ENCODE measurements at regions of chr22 and their contacts with region 1.

Region 1: DNA sequence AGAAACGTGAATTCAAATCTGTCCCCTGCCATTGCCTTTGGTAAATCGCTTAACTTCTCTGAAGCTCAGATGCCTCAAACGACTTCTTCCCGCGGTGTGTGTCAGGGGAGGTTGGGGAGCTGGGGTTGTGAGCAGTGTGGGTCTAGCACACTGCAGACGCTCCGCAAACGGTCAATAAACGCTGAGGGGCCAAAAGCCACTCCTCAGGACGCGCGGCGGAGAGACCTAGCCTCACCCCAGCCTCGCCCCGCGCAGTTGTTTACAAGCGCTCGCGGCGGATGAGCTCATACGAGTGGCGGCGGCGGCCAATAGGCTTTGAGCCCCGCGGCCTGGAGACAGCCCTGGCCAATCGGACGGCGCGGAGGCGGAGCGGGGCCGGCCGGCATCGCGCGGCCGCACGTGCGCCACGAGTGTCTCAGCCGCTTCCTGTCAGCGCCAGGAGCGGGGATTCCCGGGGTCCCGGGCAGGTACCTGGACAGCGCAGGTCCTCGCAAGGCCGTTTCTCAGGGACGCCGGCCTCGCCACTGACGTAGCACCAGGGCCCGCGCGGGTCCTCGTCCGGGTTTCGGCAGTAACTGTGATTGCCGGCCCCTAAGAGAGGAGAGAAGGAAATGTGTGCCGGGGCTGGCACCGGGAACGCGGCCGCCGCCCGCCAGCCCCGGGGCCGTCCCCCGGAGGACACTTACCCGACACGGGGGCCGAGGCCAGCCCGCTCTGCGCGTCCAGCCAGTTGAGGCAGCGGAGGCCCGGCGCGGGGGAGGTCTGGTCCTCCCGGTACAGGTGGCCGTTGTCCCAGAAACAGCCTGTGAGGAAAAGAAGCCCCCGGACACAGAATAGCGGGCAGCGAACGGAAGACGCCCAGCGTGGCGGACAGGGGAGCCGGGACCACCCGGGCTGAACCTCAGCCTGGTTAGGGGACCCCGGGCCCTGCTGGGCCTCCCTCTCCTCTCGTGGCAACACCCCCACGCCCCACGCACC is 1.5 kb downstream of the PIK3IP1 start:
- DNase-seq: peak; percentile 89
- ATAC-seq: peak; percentile 86
- H3K4me3 Mint-ChIP-seq: peak overlapping the region; percentile 92
- H3K27ac Mint-ChIP-seq: peak overlapping the region; percentile 100
- H3K4me1 Mint-ChIP-seq: peaks cover 80% of the 10 kb centered on the region
- H3K27me3 Mint-ChIP-seq: no peaks in the 10 kb centered on the region
- CTCF ChIP-seq: no peak

Region 2: DNA sequence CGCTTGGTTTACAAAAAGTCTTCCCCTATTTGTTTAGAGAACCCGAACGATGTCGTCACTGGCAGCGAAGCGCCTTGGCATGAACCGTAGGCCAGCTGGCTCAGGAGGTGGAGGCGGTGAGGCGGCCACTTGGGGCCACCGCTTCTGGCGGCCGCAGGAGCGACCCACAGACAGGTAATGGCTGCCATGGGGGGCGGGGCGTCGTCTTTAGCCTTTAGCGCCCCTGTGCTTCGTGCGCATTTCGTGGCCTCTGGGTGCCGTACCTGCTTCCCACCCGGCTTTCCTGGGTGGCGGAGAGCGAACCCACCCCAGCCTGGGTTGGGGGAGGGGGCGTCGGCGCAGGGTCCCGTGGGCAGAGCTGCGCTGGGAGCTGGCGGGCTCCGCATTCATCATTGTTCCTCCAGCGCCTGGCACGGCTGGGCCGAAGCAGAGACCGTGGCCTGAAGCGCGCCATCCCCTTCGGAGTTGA is 596.6 kb before region 1 on chr22:
- CTCF ChIA-PET with region 1: no interaction called
- POLR2A ChIA-PET with region 1: no interaction called
- intact Hi-C with region 1: no loop called
- DNase-seq: peak; percentile 46
- ATAC-seq: peak; percentile 65
- H3K4me3 Mint-ChIP-seq: peak overlapping the region; percentile 85
- H3K27ac Mint-ChIP-seq: no peak overlapping the region
- H3K4me1 Mint-ChIP-seq: peaks cover 7% of the 10 kb centered on the region
- H3K27me3 Mint-ChIP-seq: peaks cover 34% of the 10 kb centered on the region
- CTCF ChIP-seq: no peak

Region 3: GRCh38 chr22:30968924-30969539 is 321.8 kb before region 1 on chr22 and contains the start of gene TUG1:
- CTCF ChIA-PET with region 1: interaction called, 4 read pairs
- POLR2A ChIA-PET with region 1: interaction called, 13 read pairs
- intact Hi-C with region 1: loop called (anchors 1 kb)
- DNase-seq: peak; percentile 93
- ATAC-seq: peak; percentile 92
- H3K4me3 Mint-ChIP-seq: peak within 1 kb of the TSS; percentile 95
- H3K27ac Mint-ChIP-seq: peak within 1 kb of the TSS; percentile 94
- H3K4me1 Mint-ChIP-seq: peaks cover 56% of the 10 kb centered on the region
- H3K27me3 Mint-ChIP-seq: no peaks in the 10 kb centered on the region
- CTCF ChIP-seq: no peak
- total RNA-seq, gene TUG1: 70.4 and 83.0 TPM in 2 replicates

Region 4: DNA sequence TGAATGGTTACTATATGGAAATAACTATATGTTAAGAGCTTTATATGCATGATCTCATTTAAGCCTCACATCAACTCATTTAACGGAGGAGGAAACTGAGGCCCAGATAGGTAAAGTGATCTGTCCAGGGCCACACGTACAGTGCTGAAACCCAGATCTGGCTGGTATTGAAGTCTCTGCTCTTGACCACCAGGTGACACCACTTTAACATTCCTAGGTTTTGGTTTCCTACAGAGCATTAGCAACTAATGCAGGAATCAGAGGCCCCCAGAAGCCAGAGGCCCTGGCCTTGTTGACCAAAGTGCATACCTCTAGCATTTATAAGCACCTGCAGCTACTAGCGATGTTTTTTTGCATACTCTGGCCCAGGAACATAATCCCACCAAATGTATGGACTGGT is 91.6 kb before region 1 on chr22:
- CTCF ChIA-PET with region 1: no interaction called
- POLR2A ChIA-PET with region 1: no interaction called
- intact Hi-C with region 1: no loop called
- DNase-seq: no peak
- ATAC-seq: no peak
- H3K4me3 Mint-ChIP-seq: no peak overlapping the region
- H3K27ac Mint-ChIP-seq: no peak overlapping the region
- H3K4me1 Mint-ChIP-seq: no peaks in the 10 kb centered on the region
- H3K27me3 Mint-ChIP-seq: no peaks in the 10 kb centered on the region
- CTCF ChIP-seq: no peak

Region 5: DNA sequence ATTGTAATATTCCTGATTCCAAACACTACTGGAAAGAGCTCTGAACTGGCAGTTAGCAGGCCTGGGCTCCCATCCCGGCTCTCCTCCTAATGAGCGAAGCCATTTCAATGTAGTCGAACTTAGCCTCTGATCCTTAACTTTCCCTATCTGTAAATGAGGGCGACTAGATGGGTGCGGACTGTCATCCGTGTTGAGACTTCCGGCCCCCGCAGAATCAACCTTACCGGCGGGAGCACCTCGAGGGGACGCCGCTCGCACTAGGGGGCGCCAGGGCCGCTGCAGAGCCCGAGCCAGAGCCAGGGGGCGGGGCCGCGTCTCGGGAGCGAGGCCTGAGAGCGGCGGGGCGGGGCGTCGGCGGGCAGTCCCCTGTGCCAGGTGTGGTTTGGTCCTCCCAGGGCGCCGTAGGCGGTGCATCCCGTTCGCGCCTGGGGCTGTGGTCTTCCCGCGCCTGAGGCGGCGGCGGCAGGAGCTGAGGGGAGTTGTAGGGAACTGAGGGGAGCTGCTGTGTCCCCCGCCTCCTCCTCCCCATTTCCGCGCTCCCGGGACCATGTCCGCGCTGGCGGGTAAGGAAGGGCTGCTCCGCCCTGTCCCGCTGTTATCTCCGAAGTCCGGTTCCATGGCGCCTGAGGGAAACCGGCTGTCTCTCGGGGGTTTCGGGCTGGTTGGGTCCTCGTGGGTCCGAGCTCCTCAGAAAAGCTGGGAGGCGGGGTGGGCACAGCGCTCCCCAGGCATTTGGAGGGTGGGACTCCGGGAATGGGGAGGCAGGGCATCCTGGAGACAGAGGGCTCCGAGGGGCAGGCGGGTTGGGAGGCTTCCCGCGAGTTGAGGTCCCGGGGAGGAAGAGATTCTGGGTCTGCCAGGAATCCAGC is 78.7 kb before region 1 on chr22 and contains the start of gene LIMK2:
- CTCF ChIA-PET with region 1: interaction called, 5 read pairs
- POLR2A ChIA-PET with region 1: interaction called, 31 read pairs
- intact Hi-C with region 1: loop called (anchors 1 kb)
- DNase-seq: peak; percentile 98
- ATAC-seq: peak; percentile 100
- H3K4me3 Mint-ChIP-seq: peak within 1 kb of the TSS; percentile 90
- H3K27ac Mint-ChIP-seq: peak within 1 kb of the TSS; percentile 79
- H3K4me1 Mint-ChIP-seq: peaks cover 26% of the 10 kb centered on the region
- H3K27me3 Mint-ChIP-seq: no peaks in the 10 kb centered on the region
- CTCF ChIP-seq: peak; percentile 30
- total RNA-seq, gene LIMK2: 15.3 and 17.7 TPM in 2 replicates

Region 6: GRCh38 chr22:31308181-31308580 is 17.4 kb after region 1 on chr22:
- CTCF ChIA-PET with region 1: interaction called, 44 read pairs
- POLR2A ChIA-PET with region 1: interaction called, 11 read pairs
- intact Hi-C with region 1: loop called (anchors 1 kb)
- DNase-seq: no peak
- ATAC-seq: peak; percentile 56
- H3K4me3 Mint-ChIP-seq: peak overlapping the region; percentile 44
- H3K27ac Mint-ChIP-seq: peak overlapping the region; percentile 74
- H3K4me1 Mint-ChIP-seq: peaks cover 28% of the 10 kb centered on the region
- H3K27me3 Mint-ChIP-seq: no peaks in the 10 kb centered on the region
- CTCF ChIP-seq: no peak

Region 7: DNA sequence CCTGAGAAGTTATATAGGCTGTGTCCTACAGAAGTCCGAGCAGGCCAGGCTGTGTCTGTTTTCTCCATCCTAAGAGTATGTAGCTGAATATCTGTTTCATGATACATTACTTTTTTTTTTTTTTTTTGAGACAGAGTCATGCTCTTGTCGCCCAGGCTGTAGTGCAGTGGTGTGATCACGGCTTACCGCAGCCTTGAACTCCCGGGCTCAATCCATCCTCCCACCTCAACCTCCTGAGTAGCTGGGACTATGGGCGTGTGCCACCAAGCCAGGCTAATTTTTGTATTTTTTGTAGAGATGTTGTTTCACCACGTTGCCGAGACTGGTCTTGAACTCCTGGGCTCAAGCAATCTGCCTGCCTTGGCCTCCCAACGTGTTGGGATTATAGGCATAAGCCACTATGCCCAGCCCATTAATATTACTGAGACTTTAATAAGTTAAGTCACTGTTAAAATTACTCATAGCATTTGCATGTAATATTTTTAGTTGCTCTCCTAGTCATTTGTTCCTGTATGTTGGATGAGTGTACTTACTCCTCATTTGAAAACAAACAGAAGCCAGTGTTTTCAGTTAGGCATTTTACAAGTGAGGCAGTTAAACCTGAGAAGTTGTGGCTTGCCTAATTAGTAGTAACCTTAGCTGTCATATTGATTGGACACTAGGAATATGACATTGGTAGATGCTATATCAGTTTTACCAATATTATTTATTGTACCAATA is 134.7 kb after region 1 on chr22:
- CTCF ChIA-PET with region 1: no interaction called
- POLR2A ChIA-PET with region 1: interaction called, 11 read pairs
- intact Hi-C with region 1: no loop called
- DNase-seq: no peak
- ATAC-seq: no peak
- H3K4me3 Mint-ChIP-seq: no peak overlapping the region
- H3K27ac Mint-ChIP-seq: no peak overlapping the region
- H3K4me1 Mint-ChIP-seq: no peaks in the 10 kb centered on the region
- H3K27me3 Mint-ChIP-seq: no peaks in the 10 kb centered on the region
- CTCF ChIP-seq: no peak

Region 8: DNA sequence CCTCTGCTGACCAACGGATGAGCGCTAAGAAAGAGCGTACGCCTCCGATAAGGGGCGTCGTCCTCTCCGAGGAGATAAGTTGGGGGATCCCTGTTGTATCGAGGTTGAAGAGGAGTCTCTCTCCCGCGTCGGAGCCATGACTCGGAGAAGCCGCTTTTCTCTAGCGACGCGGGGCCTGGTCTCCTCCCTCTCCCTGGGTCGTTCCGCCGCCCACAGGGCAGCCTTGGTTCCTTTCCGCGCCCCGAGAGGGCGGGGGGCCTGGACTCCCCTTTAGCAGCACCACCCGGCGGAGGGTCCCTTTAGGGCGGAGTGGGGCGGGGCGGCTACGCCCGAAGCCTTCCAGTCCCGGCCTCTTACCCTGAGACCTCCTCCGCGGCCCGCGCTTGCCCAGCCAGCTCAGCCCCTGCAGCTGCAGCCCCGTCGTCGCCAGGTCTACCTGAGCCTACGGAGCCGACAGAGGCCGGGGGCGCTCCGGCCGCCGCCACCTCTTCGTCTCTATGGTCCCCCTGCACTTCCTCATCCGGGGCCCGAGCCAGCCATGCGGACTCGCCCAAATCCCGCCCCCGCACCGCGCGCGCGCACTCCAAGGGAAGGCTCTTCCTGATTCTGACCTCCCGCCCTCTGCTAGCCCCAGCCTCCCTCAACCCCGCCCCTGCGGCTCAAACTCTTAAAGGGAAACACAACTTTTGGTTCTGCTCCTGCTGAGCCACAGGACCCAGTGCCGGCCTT is 459.0 kb after region 1 on chr22 and contains the start of gene PRR14L:
- CTCF ChIA-PET with region 1: no interaction called
- POLR2A ChIA-PET with region 1: interaction called, 5 read pairs
- intact Hi-C with region 1: loop called (anchors 1 kb)
- DNase-seq: peak; percentile 100
- ATAC-seq: peak; percentile 73
- H3K4me3 Mint-ChIP-seq: peak within 1 kb of the TSS; percentile 92
- H3K27ac Mint-ChIP-seq: peak within 1 kb of the TSS; percentile 96
- H3K4me1 Mint-ChIP-seq: peaks cover 52% of the 10 kb centered on the region
- H3K27me3 Mint-ChIP-seq: no peaks in the 10 kb centered on the region
- CTCF ChIP-seq: no peak
- total RNA-seq, gene PRR14L: 49.7 and 59.5 TPM in 2 replicates

Measured in activated B cell treated with CpG ODN at 0.5 μM for 24 hours (primary cell).